Activated B cell treated with CpG ODN at 0.5 μM for 24 hours (primary cell): ENCODE measurements at regions of chr2 and their contacts with region 1.

Region 1: GRCh38 chr2:96816128-96816835 is at the start of gene CNNM3:
- DNase-seq: peak; percentile 97
- ATAC-seq: peak; percentile 93
- H3K4me3 Mint-ChIP-seq: peak within 1 kb of the TSS; percentile 88
- H3K27ac Mint-ChIP-seq: peak within 1 kb of the TSS; percentile 83
- H3K4me1 Mint-ChIP-seq: peaks cover 56% of the 10 kb centered on the region
- H3K27me3 Mint-ChIP-seq: no peaks in the 10 kb centered on the region
- CTCF ChIP-seq: no peak
- total RNA-seq, gene CNNM3: 19.0 and 20.3 TPM in 2 replicates

Region 2: GRCh38 chr2:96145036-96145847 is 671.0 kb before region 1 on chr2 and contains the start of gene DUSP2:
- CTCF ChIA-PET with region 1: no interaction called
- POLR2A ChIA-PET with region 1: no interaction called
- intact Hi-C with region 1: loop called (anchors 1 kb)
- DNase-seq: peak; percentile 92
- ATAC-seq: peak; percentile 58
- H3K4me3 Mint-ChIP-seq: peak within 1 kb of the TSS; percentile 93
- H3K27ac Mint-ChIP-seq: peak within 1 kb of the TSS; percentile 98
- H3K4me1 Mint-ChIP-seq: peaks cover 71% of the 10 kb centered on the region
- H3K27me3 Mint-ChIP-seq: no peaks in the 10 kb centered on the region
- CTCF ChIP-seq: no peak
- total RNA-seq, gene DUSP2: 118 and 122 TPM in 2 replicates

Region 3: DNA sequence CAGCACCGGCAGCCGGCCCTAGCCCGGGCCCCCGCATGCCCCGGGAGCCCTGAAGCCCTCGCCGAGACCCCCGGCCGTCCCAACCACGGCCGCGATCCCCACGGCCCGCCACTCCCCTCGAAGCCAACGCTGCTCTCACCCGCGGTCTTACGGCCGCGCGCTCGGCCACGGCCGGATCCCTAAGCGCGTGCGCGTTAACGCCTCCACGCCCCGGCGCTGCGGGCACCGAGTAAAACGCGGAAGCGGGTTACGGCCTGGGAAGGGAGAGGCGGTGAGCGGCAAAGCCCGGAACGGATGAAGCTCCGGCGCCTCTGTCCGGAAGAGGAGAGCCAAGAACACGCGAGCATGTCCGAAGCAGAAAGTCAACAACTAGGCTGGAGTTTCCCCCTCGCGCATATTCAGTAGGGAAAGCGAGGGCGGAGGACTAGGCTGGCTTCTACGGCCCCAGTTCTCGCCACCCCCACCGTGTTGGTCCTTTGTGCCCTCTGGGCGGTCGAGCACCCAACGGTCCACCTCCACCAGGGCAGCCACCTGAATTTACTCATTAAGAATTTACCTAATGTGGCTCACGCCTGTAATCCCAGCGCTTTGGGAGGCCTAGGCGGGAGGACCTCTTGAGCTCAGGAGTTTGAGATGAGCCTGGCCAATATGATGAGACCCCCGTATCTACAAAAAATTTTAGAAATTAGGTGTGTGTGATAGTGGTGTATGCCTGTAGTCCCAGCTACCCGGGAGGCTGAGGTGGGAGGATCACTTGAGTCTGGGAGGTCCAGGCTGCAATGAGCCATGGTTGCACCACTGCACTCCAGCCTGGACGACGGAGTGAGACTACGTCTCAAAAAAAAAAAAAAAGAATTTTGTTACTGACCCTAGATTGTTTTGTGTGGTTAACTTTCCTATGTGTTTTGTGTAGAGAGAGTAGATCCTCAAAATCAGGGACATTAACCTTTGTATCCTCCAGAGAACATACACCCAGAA is 177.8 kb before region 1 on chr2 and contains the start of gene KANSL3:
- CTCF ChIA-PET with region 1: no interaction called
- POLR2A ChIA-PET with region 1: interaction called, 6 read pairs
- intact Hi-C with region 1: loop called (anchors 1 kb)
- DNase-seq: peak; percentile 94
- ATAC-seq: peak; percentile 90
- H3K4me3 Mint-ChIP-seq: peak within 1 kb of the TSS; percentile 93
- H3K27ac Mint-ChIP-seq: peak within 1 kb of the TSS; percentile 87
- H3K4me1 Mint-ChIP-seq: peaks cover 36% of the 10 kb centered on the region
- H3K27me3 Mint-ChIP-seq: no peaks in the 10 kb centered on the region
- CTCF ChIP-seq: no peak
- total RNA-seq, gene KANSL3: 24.6 and 31.4 TPM in 2 replicates

Region 4: GRCh38 chr2:96739633-96740428 is 76.5 kb before region 1 on chr2 and contains the start of gene LMAN2L:
- CTCF ChIA-PET with region 1: interaction called, 3 read pairs
- POLR2A ChIA-PET with region 1: no interaction called
- intact Hi-C with region 1: loop called (anchors 1 kb)
- DNase-seq: peak; percentile 88
- ATAC-seq: peak; percentile 99
- H3K4me3 Mint-ChIP-seq: peak within 1 kb of the TSS; percentile 98
- H3K27ac Mint-ChIP-seq: peak within 1 kb of the TSS; percentile 94
- H3K4me1 Mint-ChIP-seq: peaks cover 33% of the 10 kb centered on the region
- H3K27me3 Mint-ChIP-seq: no peaks in the 10 kb centered on the region
- CTCF ChIP-seq: no peak
- total RNA-seq, gene LMAN2L: 7.1 and 8.9 TPM in 2 replicates

Region 5: GRCh38 chr2:96760036-96760985 is 56.0 kb before region 1 on chr2 and contains the start of gene CNNM4:
- CTCF ChIA-PET with region 1: interaction called, 3 read pairs
- POLR2A ChIA-PET with region 1: interaction called, 21 read pairs
- intact Hi-C with region 1: loop called (anchors 1 kb)
- DNase-seq: peak; percentile 89
- ATAC-seq: peak; percentile 91
- H3K4me3 Mint-ChIP-seq: peak within 1 kb of the TSS; percentile 90
- H3K27ac Mint-ChIP-seq: peak within 1 kb of the TSS; percentile 89
- H3K4me1 Mint-ChIP-seq: peaks cover 49% of the 10 kb centered on the region
- H3K27me3 Mint-ChIP-seq: no peaks in the 10 kb centered on the region
- CTCF ChIP-seq: no peak
- total RNA-seq, gene CNNM4: 7.4 and 10.0 TPM in 2 replicates

Region 6: GRCh38 chr2:96951093-96951654 is 134.9 kb after region 1 on chr2:
- CTCF ChIA-PET with region 1: no interaction called
- POLR2A ChIA-PET with region 1: no interaction called
- intact Hi-C with region 1: loop called (anchors 2 kb)
- DNase-seq: peak; percentile 59
- ATAC-seq: peak; percentile 97
- H3K4me3 Mint-ChIP-seq: no peak overlapping the region
- H3K27ac Mint-ChIP-seq: no peak overlapping the region
- H3K4me1 Mint-ChIP-seq: peaks cover 11% of the 10 kb centered on the region
- H3K27me3 Mint-ChIP-seq: peaks cover 15% of the 10 kb centered on the region
- CTCF ChIP-seq: no peak